Dendritic cell treated with granulocyte-macrophage colony-stimulating factor and Interleukin-4, amounts not matched to agents 40 ng/mL and 50 ng/mL, for 4 days (primary cell): ENCODE measurements at regions of chr20 and their contacts with region 1.

Region 1: DNA sequence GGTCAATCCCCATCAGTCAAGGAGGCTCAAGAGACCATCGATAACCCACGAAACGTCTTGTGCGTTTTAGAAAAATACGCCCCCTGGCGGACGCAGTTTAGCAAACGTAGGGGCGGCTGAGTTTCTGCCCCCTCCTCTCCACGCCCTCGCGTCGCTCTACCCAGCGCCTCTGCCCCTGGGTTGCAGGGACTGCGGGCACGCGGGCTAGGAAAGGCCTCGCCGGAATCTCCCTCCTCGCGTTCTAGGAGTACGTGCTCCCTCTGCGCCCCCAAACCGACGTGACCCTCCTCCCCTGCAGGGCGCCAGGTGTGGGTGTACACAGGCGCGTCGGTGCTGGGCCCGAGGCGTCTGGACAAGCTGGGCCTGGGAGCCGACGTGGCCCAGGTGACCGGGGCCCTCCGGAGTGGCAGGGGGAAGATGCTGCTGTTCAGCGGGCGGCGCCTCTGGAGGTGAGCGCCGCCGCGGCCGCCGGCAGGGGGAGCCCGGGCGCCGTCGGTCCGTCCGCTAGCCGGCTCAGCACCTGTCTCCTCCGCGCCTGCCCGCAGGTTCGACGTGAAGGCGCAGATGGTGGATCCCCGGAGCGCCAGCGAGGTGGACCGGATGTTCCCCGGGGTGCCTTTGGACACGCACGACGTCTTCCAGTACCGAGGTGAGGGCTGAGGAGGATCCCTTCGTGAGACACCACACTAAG is 5.3 kb downstream of the MMP9 start:
- H3K4me3 Mint-ChIP-seq: peak overlapping the region; percentile 70
- H3K27ac Mint-ChIP-seq: peak overlapping the region; percentile 99
- H3K4me1 Mint-ChIP-seq: peaks cover 77% of the 10 kb centered on the region
- H3K27me3 Mint-ChIP-seq: peaks cover 14% of the 10 kb centered on the region

Region 2: DNA sequence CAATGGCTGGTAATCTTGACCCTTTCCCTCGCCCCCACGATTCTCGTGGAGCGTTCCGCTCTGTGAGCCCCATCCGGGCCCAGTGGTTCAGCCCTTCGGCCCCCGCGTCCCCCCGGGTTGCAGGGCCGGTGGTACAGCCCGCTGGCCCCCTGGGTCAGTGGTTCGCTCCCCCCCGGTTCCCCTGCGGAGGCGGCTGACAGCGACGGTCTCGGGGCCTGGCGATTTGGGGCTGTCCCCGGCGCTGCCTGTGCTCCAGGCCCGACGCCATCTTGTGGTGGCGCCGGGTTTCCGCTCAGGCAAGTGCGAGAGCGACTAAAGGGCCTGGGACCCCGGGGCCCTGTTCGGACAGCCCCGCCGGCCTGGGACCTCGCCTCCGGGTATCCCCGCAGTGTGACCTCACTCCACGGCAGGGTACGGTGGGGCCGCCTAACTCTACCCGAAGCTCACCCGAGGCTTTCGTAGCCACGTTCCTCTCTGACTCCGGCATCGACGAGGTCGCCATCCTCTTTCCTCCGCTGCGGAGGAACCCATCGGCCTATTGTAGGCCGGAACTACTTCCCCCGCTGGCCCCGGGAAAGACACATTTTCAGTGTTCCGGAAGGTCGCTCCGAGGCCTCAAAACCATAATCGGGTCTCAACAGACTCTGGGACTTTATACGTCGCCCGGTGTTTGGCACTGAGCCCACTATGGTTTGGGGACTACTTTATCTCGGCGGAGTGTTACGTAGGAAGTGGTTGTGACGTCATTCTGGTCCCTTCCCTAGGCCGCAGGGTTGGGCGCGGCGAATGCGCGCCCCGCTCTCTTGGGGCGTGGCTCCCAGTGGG is 42.1 kb before region 1 on chr20 and contains the start of gene ZNF335:
- intact Hi-C with region 1: loop called (anchors 5 kb)
- H3K4me3 Mint-ChIP-seq: peak within 1 kb of the TSS; percentile 83
- H3K27ac Mint-ChIP-seq: peak within 1 kb of the TSS; percentile 95
- H3K4me1 Mint-ChIP-seq: peaks cover 49% of the 10 kb centered on the region
- H3K27me3 Mint-ChIP-seq: no peaks in the 10 kb centered on the region

Region 3: DNA sequence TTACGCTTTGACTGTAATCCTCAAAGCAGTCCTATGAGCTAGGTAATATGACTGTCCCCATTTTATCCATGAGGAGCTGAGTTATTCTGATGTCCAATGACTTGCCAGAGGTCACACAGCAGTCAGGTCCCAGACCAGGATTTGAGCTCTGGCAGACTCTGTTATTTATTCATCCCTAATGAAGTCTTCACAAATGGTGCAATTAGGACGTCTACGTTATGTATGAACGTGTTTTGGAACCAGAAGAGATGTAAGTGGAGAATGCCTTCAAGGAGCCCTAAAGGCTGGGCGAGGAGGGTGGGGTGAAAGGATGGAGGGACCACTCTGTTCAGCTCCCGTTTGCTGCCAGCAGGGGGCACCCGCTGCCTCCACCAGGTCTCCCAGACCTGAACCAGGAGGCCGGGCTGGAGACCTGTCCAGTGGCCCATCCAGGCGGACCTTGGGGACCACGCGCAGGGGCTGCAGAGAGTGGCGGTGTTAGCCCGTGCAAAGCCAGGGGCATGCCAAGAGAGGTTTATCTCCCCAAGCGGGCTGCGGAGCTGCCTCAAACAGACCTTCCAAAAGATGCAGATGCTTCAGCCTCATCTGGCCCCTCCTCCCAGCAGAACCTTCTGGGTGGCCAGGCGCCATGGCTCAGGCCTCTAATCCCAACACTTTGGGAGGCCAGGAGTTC is 26.7 kb before region 1 on chr20:
- intact Hi-C with region 1: loop called (anchors 1 kb)
- H3K4me3 Mint-ChIP-seq: no peak overlapping the region
- H3K27ac Mint-ChIP-seq: no peak overlapping the region
- H3K4me1 Mint-ChIP-seq: peaks cover 5% of the 10 kb centered on the region
- H3K27me3 Mint-ChIP-seq: peaks cover 43% of the 10 kb centered on the region

Region 4: DNA sequence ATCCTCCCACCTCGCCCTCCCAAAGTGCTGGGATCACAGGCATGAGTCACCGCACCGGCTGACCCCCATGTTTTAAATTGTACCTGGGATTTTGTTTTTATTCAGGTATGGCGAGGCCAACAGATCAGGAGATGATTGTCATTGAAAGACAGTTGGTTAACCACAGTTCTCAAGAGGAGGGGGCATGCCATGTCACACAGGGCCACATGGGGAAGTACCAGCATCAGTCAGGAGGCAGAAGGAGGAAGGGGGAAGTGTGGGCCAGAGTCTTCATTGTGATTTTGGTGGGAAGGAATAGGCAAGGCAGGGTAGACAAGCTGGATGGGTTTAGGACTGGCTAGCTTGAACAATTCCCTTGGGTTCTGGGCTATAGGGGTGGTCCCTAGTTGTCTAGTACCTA is 15.2 kb before region 1 on chr20:
- intact Hi-C with region 1: loop called (anchors 1 kb)
- H3K4me3 Mint-ChIP-seq: no peak overlapping the region
- H3K27ac Mint-ChIP-seq: peak overlapping the region; percentile 78
- H3K4me1 Mint-ChIP-seq: peaks cover 83% of the 10 kb centered on the region
- H3K27me3 Mint-ChIP-seq: peaks cover 7% of the 10 kb centered on the region

Region 5: GRCh38 chr20:46174469-46175128 is 160.6 kb after region 1 on chr20:
- intact Hi-C with region 1: loop called (anchors 2 kb)
- H3K4me3 Mint-ChIP-seq: no peak overlapping the region
- H3K27ac Mint-ChIP-seq: no peak overlapping the region
- H3K4me1 Mint-ChIP-seq: no peaks in the 10 kb centered on the region
- H3K27me3 Mint-ChIP-seq: peaks cover 83% of the 10 kb centered on the region